ENCODE measurements at regions of chr9 and their contacts with region 1.

Region 1: GRCh38 chr9:92877531-92878430 is at the start of gene ZNF484:
- DNase-seq: peak; percentile 98
- ATAC-seq: peak; percentile 100
- H3K4me3 ChIP-seq: peak within 1 kb of the TSS; percentile 27 to 89
- H3K27ac ChIP-seq: peak within 1 kb of the TSS in 1 of 2 donors; percentile 86
- H3K4me1 ChIP-seq: no peaks in the 10 kb centered on the region
- H3K27me3 ChIP-seq: no peaks in the 10 kb centered on the region
- total RNA-seq, gene ZNF484: 11.6 to 17.3 TPM

Region 2: DNA sequence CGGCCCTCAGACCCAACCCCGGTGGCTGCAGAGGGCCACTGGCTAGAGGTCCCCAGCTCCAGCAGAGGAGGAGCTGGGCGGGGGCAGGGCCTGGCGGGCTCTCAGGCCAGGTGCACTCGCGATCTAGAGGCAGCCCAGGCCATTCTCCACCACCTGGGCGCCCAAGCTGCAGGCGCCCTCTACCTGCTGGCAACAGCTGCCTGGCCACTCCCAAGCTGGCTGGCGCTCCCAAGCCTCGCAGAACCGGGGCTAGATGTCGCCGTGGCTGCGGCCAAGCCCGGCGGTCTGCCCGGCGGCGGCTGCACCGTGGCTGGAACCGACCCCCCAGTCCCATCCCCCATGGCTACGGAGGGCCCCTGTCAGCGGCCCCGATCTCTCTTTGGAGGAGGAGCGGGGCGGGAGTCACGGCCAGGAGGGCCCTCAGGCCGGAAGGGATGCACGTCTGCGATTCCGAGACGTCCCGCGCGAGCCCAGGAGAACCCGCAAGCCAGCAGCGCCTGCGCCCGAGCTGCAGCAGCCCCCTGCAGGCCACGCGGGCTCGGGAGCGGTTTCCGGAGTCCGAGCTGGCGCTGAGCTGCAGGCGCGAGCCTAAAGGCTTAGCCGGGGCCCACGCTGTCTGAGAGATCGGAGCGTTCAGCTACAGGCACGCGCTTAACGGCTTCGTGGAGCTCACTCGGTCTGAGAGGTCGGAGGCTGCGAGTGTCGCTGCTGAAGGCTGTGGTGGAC is 68.9 kb before region 1 on chr9:
- intact Hi-C with region 1: loop called in 1 of 2 experiments (anchors 10 kb)
- DNase-seq: peak; percentile 81 to 93
- ATAC-seq: peak; percentile 63
- H3K4me3 ChIP-seq: no peak overlapping the region
- H3K27ac ChIP-seq: no peak overlapping the region
- H3K4me1 ChIP-seq: no peaks in the 10 kb centered on the region
- H3K27me3 ChIP-seq: no peaks in the 10 kb centered on the region

Region 3: DNA sequence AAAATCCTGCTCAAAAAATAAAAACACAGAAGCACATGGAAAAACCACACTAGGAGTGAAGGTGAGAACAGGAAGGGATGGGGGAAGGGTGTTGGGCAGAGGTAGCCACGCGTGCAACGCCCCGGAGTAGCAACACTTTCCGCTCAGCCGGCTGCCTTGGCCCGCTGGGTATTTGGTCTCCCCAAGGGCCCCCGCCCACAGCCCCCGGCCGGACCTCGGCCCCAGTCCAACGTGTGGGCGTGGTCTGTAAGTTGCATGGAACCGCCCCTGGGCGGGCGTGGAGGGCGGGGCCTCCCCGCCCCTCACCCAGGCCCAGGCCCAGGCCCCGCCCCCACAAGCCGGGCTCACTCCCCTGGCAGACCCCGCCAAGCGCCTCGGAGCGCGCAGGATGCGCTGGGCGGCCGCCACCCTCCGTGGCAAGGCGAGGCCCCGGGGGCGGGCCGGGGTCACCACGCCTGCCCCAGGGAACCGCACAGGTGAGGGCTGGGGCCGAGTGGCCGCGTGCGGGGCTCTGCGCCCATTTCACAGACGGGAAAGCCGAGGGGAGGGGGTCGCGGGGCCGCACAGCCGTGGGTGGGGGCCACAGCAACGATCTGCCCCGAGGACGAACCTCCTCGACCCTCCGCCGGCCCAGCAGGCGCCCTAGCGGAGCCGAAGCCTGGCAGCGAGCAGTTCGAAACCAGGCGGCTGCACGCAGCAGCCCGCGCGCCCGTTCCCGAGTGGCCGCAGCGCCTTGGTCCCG is 180.7 kb after region 1 on chr9 and contains the start of gene SUSD3:
- intact Hi-C with region 1: loop called in 1 of 2 experiments (anchors 10 kb)
- DNase-seq: peak; percentile 80 to 92
- ATAC-seq: peak; percentile 78
- H3K4me3 ChIP-seq: peak within 1 kb of the TSS; percentile 45 to 51
- H3K27ac ChIP-seq: peak within 1 kb of the TSS in 1 of 2 donors; percentile 46
- H3K4me1 ChIP-seq: no peaks in the 10 kb centered on the region
- H3K27me3 ChIP-seq: no peaks in the 10 kb centered on the region
- total RNA-seq, gene SUSD3: 3.8 to 10.3 TPM

Measured in aorta (tissue), 5 donors.